Natural killer cell (primary cell): ENCODE measurements at regions of chr9 and their contacts with region 1.

Region 1: DNA sequence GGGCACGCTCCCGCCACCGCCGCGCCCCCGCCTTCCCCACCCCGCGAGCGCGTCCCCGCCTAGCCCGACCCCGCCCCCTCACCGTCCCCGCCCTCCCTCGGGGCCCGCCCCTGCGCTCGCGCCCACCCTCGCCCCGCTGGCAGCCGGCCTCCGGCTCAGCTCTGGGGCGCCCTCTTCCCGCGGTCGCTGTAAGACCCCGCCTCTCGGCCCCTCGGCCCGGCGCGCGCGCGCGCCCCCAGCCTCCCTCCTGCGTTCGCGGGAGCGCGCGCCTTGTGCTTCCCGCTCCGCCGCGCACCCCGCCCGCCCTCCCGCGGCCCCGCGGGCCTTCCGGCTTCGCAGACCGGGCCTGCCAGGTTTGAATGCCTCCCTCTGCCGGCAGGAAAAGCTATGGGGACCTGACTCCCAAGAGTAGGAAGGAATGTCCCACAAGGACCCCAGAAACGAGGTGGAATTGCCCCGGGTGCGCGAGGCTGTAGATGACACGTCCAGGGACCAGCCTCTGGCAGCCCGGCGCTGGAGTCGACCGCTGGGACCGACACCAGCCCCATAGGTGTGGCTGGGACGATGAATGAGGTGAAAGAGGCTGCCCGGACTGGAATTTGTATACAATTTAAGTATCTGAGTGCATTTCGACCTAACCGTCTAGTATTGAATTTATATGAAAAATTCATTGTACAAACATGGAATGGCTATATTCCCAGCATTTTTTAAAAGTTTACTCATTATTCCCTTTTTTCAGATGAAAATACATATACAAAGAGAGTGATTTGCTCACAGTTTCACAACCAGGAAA is 416 bp upstream of the PTBP3 start:
- DNase-seq: peak; percentile 87 to 98
- ATAC-seq: peak; percentile 85 to 96 (median 89)
- H3K4me3 ChIP-seq: peak overlapping the region; percentile 95
- H3K4me3 Mint-ChIP-seq: peak overlapping the region; percentile 89
- H3K27ac ChIP-seq: peak overlapping the region; percentile 97
- H3K27ac Mint-ChIP-seq: peak overlapping the region; percentile 89 to 90
- H3K4me1 ChIP-seq: peaks cover 4% of the 10 kb centered on the region
- H3K4me1 Mint-ChIP-seq: peaks cover 37% of the 10 kb centered on the region in 2 donors
- H3K27me3 ChIP-seq: no peaks in the 10 kb centered on the region
- H3K27me3 Mint-ChIP-seq: no peaks in the 10 kb centered on the region
- CTCF ChIP-seq: peak; percentile 40

Region 2: DNA sequence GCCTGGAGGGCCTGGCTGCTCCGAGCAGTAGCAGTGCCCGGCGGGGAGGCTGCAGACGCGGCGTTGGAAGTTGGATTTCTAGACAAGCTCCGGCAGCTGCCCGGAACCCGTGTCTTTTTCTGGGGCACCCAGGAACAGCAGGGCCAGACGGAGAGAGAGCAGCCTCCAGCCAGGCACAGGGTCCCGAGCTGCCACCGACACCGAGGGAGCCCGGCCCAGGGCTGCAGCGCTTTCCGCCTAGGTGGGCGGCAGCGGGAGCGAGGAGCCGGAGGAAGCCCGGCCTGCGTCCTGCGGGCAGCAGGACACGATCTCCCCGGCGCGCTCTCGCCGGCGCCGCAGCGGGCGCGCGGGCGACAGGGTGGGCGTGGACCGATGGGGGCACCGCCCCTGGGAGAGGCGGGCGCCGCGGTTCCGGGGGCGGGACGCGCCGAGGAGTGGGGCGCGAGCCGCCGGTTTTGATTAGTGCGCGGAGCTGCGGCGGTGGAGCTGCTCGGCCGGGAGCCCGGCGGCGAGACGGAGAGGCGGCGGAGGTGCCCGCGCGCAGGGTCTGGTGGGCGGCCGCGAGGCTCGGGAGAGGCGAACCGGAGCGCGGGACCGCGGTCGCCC is 437.4 kb before region 1 on chr9 and contains the start of gene UGCG:
- intact Hi-C with region 1: loop called (anchors 5 kb)
- DNase-seq: peak; percentile 92 to 93
- ATAC-seq: peak; percentile 92 to 98 (median 95)
- H3K4me3 ChIP-seq: peak within 1 kb of the TSS; percentile 95
- H3K4me3 Mint-ChIP-seq: peak within 1 kb of the TSS; percentile 99
- H3K27ac ChIP-seq: peak within 1 kb of the TSS; percentile 80
- H3K27ac Mint-ChIP-seq: peak within 1 kb of the TSS in 1 of 2 donors; percentile 91
- H3K4me1 ChIP-seq: peaks cover 10% of the 10 kb centered on the region
- H3K4me1 Mint-ChIP-seq: peaks cover 9 to 12% of the 10 kb centered on the region in 2 donors
- H3K27me3 ChIP-seq: no peaks in the 10 kb centered on the region
- H3K27me3 Mint-ChIP-seq: no peaks in the 10 kb centered on the region
- CTCF ChIP-seq: no peak
- total RNA-seq, gene UGCG: 17.9 to 21.4 (median 18.8) TPM

Region 3: DNA sequence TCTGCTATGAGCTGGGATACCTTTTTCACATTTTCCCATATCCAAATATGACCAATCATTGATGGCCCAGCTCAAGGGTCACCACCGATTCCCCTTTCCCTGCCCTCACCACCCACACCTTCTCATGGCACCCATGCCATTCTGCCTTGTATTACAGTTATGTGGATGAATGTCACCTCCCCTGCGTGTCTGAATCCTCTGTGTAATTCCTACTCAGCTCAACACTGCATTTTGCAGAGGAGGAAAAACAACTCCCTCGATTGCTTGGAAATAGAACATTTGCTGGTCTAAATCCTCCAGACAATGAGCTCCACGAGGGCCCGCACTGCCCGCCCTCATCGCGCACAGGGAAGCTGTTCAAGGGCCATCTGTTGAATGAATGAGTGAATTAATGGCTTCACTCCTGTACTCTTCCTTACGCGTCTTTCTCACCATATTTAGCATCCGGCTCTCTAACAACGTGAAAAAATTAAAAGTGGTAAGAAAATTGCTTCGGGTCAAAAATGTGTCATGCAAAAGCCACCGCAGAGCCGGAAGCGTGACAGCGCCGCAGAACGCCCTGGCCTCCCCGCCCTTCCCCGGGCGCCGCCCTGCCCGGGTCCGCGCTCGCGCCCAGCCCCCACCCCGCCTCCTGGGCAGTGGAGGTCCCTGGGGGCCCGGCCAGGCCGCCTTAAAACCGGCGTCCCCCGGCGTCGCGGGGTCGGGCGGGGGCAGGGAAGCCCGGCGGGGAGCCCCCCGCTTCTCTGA is 159.4 kb before region 1 on chr9:
- intact Hi-C with region 1: loop called (anchors 2 kb)
- DNase-seq: peak; percentile 84 to 85
- ATAC-seq: peak; percentile 76 to 91 (median 82)
- H3K4me3 ChIP-seq: peak overlapping the region; percentile 33
- H3K4me3 Mint-ChIP-seq: peak overlapping the region; percentile 92
- H3K27ac ChIP-seq: peak overlapping the region; percentile 50
- H3K27ac Mint-ChIP-seq: peak overlapping the region; percentile 94 to 96
- H3K4me1 ChIP-seq: peaks cover 69% of the 10 kb centered on the region
- H3K4me1 Mint-ChIP-seq: peaks cover 78 to 89% of the 10 kb centered on the region in 2 donors
- H3K27me3 ChIP-seq: no peaks in the 10 kb centered on the region
- H3K27me3 Mint-ChIP-seq: no peaks in the 10 kb centered on the region
- CTCF ChIP-seq: no peak

Region 4: DNA sequence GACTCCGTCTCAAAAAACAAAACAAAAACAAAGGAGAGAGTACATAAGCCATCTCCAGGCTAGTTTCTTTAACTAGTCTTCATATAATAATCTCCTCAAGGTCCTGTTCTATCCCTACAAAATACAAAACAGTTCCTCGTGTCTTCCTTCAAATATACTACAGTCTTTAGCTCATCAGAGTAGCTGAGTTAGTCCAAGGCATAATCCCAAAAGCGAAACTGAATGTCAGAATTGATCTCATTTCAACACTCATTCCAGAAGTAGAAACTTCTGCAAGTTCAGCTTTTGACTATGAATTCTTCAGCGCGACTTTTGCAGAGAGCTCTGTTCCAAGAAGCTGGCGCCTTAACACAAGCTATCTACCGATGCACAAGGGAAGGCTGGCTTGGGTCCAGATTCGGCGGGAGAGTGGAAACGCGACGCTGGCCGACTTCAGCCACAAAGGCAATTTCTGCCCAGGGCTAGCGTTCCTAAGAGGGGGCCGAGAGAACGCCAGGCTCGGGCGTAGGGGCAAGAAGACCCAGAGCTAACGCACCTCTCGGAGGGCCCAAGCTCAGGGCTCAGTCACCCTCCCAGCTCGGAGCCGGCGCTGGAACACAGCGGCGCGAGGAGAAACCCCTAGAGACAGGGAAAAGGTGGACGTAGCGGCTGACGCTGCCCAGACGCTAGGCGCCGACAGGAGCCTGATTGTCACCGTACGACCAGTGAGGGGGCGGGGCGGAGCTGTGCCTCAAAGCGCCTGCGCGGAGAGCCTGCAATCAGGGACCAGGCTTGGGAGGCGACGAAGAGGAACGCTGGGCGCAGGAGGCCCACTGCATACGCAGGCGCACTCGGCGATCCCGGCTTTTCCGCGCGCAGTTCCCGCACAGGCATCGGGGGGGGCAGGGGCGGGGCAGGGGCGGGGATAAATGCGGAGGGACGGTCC is 45.6 kb after region 1 on chr9:
- intact Hi-C with region 1: loop called (anchors 2 kb)
- DNase-seq: peak; percentile 98
- ATAC-seq: peak; percentile 93 to 97 (median 95)
- H3K4me3 ChIP-seq: peak overlapping the region; percentile 98
- H3K4me3 Mint-ChIP-seq: peak overlapping the region; percentile 100
- H3K27ac ChIP-seq: peak overlapping the region; percentile 96
- H3K27ac Mint-ChIP-seq: peak overlapping the region; percentile 97 to 98
- H3K4me1 ChIP-seq: peaks cover 9% of the 10 kb centered on the region
- H3K4me1 Mint-ChIP-seq: peaks cover 39 to 48% of the 10 kb centered on the region in 2 donors
- H3K27me3 ChIP-seq: no peaks in the 10 kb centered on the region
- H3K27me3 Mint-ChIP-seq: no peaks in the 10 kb centered on the region
- CTCF ChIP-seq: no peak

Region 5: GRCh38 chr9:112717661-112718341 is 384.0 kb after region 1 on chr9 and contains the start of gene INIP:
- intact Hi-C with region 1: loop called (anchors 5 kb)
- DNase-seq: peak; percentile 94 to 99
- ATAC-seq: peak; percentile 91 to 97 (median 91)
- H3K4me3 ChIP-seq: peak within 1 kb of the TSS; percentile 65
- H3K4me3 Mint-ChIP-seq: peak within 1 kb of the TSS; percentile 99
- H3K27ac ChIP-seq: peak within 1 kb of the TSS; percentile 84
- H3K27ac Mint-ChIP-seq: peak within 1 kb of the TSS; percentile 99 to 100
- H3K4me1 ChIP-seq: peaks cover 13% of the 10 kb centered on the region
- H3K4me1 Mint-ChIP-seq: peaks cover 19 to 20% of the 10 kb centered on the region in 2 donors
- H3K27me3 ChIP-seq: no peaks in the 10 kb centered on the region
- H3K27me3 Mint-ChIP-seq: peaks cover 0 to 4% of the 10 kb centered on the region in 2 donors
- CTCF ChIP-seq: no peak
- total RNA-seq, gene INIP: 9.9 to 16.7 (median 16.4) TPM